ENCODE measurements at regions of chr5 and their contacts with region 1.

Region 1: GRCh38 chr5:9387879-9388278 is 158.0 kb downstream of the SEMA5A start:
- DNase-seq: no peak
- H3K4me3 ChIP-seq: no peak overlapping the region
- H3K27ac ChIP-seq: no peak overlapping the region
- H3K4me1 ChIP-seq: no peaks in the 10 kb centered on the region
- H3K27me3 ChIP-seq: no peaks in the 10 kb centered on the region
- CTCF ChIP-seq: no peak
- POLR2A ChIP-seq: no peak

Region 2: GRCh38 chr5:8923526-8923925 is 464.4 kb before region 1 on chr5:
- CTCF ChIA-PET with region 1: no interaction called
- POLR2A ChIA-PET with region 1: no interaction called
- dilution Hi-C with region 1: no loop called
- intact Hi-C with region 1: loop called (anchors 5 kb)
- DNase-seq: no peak
- H3K4me3 ChIP-seq: no peak overlapping the region
- H3K27ac ChIP-seq: no peak overlapping the region
- H3K4me1 ChIP-seq: no peaks in the 10 kb centered on the region
- H3K27me3 ChIP-seq: no peaks in the 10 kb centered on the region
- CTCF ChIP-seq: no peak
- POLR2A ChIP-seq: no peak

Region 3: DNA sequence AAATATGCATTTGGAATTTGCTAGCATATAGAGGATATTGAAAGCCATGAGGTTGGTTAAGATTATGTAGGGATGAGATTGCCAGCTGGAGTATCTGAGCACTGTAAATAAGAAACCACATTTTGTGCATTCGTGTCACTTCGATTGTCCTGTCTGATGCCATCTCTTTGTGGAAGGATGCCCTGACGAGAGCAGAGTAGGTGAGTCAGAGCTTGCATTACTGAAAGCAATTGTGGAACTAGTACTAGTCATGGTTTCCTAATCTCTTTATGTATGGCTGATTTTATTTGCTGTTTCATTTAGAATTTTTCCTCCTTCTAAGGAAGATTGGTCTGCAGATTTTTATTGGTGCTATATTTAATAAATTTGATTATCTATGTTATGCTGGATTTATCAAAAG is 256.8 kb after region 1 on chr5:
- CTCF ChIA-PET with region 1: no interaction called
- POLR2A ChIA-PET with region 1: no interaction called
- dilution Hi-C with region 1: no loop called
- intact Hi-C with region 1: no loop called
- DNase-seq: no peak
- H3K4me3 ChIP-seq: no peak overlapping the region
- H3K27ac ChIP-seq: no peak overlapping the region
- H3K4me1 ChIP-seq: no peaks in the 10 kb centered on the region
- H3K27me3 ChIP-seq: no peaks in the 10 kb centered on the region
- CTCF ChIP-seq: no peak
- POLR2A ChIP-seq: no peak